ENCODE measurements at regions of chr5 and their contacts with region 1.

Region 1: GRCh38 chr5:181159286-181159829 is 12.0 kb downstream of the OR2V2 start:
- DNase-seq: peak; percentile 81 to 94 (median 85)
- H3K4me3 ChIP-seq: no peak overlapping the region
- H3K27ac ChIP-seq: no peak overlapping the region
- H3K4me1 ChIP-seq: no peaks in the 10 kb centered on the region
- H3K27me3 ChIP-seq: peaks cover 1% of the 10 kb centered on the region
- CTCF ChIP-seq: peak; percentile 83 to 90 (median 86)
- POLR2A ChIP-seq: no peak

Region 2: GRCh38 chr5:180873615-180874520 is 285.5 kb before region 1 on chr5:
- intact Hi-C with region 1: loop called in 1 of 2 experiments (anchors 10 kb)
- DNase-seq: peak in 3 of 7 donors; percentile 26 to 44 (median 37)
- H3K4me3 ChIP-seq: no peak overlapping the region
- H3K27ac ChIP-seq: peak overlapping the region in 1 of 5 donors; percentile 55
- H3K4me1 ChIP-seq: no peaks in the 10 kb centered on the region
- H3K27me3 ChIP-seq: no peaks in the 10 kb centered on the region
- CTCF ChIP-seq: no peak
- POLR2A ChIP-seq: no peak

Region 3: DNA sequence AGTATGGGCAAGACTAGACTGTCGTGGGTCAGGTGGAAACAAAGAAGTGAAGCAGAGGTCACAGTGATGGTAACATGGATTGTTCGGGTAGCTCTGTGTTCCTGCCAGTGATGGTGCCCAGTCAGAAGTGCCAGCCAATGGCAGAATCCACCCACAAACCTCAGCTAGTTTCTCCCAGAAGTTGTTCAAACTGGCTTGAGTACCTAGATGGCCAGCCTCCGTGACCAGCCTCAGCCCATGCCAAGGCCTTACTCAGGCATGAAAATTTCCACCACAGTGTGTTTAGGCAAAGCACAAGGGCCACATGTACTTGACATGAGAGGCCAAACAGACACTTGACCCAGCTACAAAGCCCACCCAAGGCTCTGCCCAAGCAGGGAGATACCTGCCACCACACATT is 138.7 kb before region 1 on chr5:
- intact Hi-C with region 1: no loop called
- DNase-seq: no peak
- H3K4me3 ChIP-seq: no peak overlapping the region
- H3K27ac ChIP-seq: no peak overlapping the region
- H3K4me1 ChIP-seq: no peaks in the 10 kb centered on the region
- H3K27me3 ChIP-seq: no peaks in the 10 kb centered on the region
- CTCF ChIP-seq: no peak
- POLR2A ChIP-seq: no peak